ENCODE measurements at regions of chr14 and their contacts with region 1.

Region 1: GRCh38 chr14:22886500-22887259 is 3.7 kb downstream of the REM2 start:
- DNase-seq: peak; percentile 72
- H3K4me3 Mint-ChIP-seq: peak overlapping the region; percentile 77
- H3K27ac Mint-ChIP-seq: peak overlapping the region; percentile 85
- H3K4me1 Mint-ChIP-seq: peaks cover 48% of the 10 kb centered on the region
- H3K27me3 Mint-ChIP-seq: peaks cover 19% of the 10 kb centered on the region

Region 2: GRCh38 chr14:22791301-22791700 is 95.4 kb before region 1 on chr14:
- CTCF ChIA-PET with region 1: no interaction called
- POLR2A ChIA-PET with region 1: no interaction called
- DNase-seq: no peak
- H3K4me3 Mint-ChIP-seq: no peak overlapping the region
- H3K27ac Mint-ChIP-seq: no peak overlapping the region
- H3K4me1 Mint-ChIP-seq: peaks cover 4% of the 10 kb centered on the region
- H3K27me3 Mint-ChIP-seq: peaks cover 2% of the 10 kb centered on the region

Region 3: DNA sequence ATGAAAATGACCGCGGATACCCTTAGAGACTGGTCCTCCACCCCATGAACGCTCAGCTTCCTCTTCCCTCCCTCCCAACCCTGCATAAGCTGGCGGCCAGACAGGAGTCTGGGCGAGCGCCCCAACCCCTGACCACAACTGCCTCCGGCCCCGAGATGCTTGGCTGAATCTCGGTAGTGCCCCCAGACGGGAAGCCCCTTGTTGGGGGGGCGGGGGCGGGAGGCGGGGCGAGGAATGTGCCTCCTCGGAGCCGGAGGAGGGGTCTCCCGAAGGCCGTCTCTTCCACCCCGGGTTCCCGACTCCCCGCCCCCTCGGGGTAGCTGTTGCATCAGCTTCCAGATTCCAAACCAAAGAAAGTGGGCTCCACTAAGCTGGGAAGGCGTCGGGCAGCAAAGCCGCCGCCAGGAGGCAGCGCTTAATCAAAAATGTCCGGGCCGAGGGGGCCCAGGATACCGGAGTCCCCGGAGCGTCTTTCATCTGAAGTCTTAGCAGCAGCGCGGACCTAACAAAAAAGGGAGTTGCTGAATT is 64.0 kb before region 1 on chr14:
- CTCF ChIA-PET with region 1: interaction called, 14 read pairs
- POLR2A ChIA-PET with region 1: interaction called, 3 read pairs
- DNase-seq: peak; percentile 60
- H3K4me3 Mint-ChIP-seq: peak overlapping the region; percentile 37
- H3K27ac Mint-ChIP-seq: no peak overlapping the region
- H3K4me1 Mint-ChIP-seq: peaks cover 35% of the 10 kb centered on the region
- H3K27me3 Mint-ChIP-seq: peaks cover 17% of the 10 kb centered on the region

Region 4: DNA sequence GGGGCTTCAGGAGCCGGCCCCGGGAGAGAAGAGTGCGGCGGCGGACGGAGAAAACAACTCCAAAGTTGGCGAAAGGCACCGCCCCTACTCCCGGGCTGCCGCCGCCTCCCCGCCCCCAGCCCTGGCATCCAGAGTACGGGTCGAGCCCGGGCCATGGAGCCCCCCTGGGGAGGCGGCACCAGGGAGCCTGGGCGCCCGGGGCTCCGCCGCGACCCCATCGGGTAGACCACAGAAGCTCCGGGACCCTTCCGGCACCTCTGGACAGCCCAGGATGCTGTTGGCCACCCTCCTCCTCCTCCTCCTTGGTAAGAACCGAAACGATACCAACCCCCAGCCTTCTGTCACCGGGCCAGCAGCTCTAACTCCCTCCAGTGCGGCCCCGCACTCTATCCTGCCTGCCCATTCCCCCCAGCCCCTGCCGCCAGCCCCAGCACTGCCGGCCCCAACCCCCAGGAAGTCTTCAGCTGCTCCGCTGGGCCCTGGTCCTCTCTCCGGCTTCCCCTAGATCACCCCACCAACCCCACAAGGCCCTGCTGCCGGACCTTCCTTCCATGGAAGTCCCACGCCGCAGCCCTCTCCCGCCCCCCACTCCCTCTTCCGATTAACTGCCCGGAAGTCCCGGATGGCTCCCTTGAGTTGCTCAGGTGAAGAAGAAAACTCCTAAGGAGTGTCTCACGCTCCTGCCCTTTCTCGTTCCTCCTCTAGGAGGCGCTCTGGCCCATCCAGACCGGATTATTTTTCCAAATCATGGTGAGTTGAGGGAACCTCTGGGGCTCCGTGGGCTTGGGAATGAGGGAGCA is 14.4 kb before region 1 on chr14:
- CTCF ChIA-PET with region 1: interaction called, 31 read pairs
- POLR2A ChIA-PET with region 1: no interaction called
- DNase-seq: peak; percentile 76
- H3K4me3 Mint-ChIP-seq: peak overlapping the region; percentile 89
- H3K27ac Mint-ChIP-seq: peak overlapping the region; percentile 99
- H3K4me1 Mint-ChIP-seq: peaks cover 26% of the 10 kb centered on the region
- H3K27me3 Mint-ChIP-seq: no peaks in the 10 kb centered on the region

Region 5: GRCh38 chr14:22900081-22900799 is 13.6 kb after region 1 on chr14:
- CTCF ChIA-PET with region 1: interaction called, 61 read pairs
- POLR2A ChIA-PET with region 1: no interaction called
- DNase-seq: peak; percentile 75
- H3K4me3 Mint-ChIP-seq: no peak overlapping the region
- H3K27ac Mint-ChIP-seq: peak overlapping the region; percentile 7
- H3K4me1 Mint-ChIP-seq: peaks cover 23% of the 10 kb centered on the region
- H3K27me3 Mint-ChIP-seq: no peaks in the 10 kb centered on the region

Region 6: GRCh38 chr14:23068476-23069412 is 182.1 kb after region 1 on chr14:
- CTCF ChIA-PET with region 1: no interaction called
- POLR2A ChIA-PET with region 1: no interaction called
- DNase-seq: peak; percentile 87
- H3K4me3 Mint-ChIP-seq: peak overlapping the region; percentile 22
- H3K27ac Mint-ChIP-seq: peak overlapping the region; percentile 69
- H3K4me1 Mint-ChIP-seq: peaks cover 37% of the 10 kb centered on the region
- H3K27me3 Mint-ChIP-seq: no peaks in the 10 kb centered on the region

Measured in activated CD4-positive, alpha-beta T cell treated with anti-CD3 and anti-CD28 coated beads, Interleukin-2, amount 10 ng/mL, durations not matched to agents 7 days and 5 days (primary cell).